ENCODE measurements at regions of chr15 and their contacts with region 1.

Region 1: DNA sequence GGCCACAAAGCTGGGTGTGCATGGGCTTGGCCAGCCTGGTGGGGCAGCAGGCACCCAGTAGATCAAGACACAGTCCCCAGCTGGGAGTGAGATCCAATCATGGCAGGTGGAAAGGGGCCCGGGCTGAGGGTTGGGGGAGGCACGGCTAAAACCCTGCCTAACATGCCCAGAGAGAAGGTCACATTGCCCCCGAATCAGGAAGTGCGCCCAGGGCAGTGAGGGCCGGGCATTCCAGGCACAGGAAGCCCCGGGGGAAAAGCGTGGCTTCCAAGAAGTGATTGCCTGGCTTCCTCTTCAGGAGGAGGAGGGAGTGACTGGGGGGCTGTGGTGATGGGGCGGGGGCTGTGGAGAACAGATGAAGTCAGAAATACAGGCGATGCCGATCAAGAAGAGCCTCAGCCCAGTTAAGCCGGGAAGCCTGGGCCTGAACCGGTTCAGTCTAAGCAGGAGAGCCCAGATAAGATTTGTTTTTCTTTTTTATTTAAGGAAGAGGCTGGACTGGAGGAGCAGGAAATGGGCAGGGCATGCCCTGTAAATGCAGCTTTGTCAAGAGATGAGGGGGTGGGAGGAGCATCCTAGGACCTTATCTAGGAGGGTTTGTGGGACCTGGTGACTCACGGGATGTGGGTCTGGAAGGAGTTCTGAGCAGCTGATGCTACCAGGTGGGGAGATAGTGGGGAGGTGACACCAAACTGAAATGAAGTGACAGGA is 83.9 kb downstream of the CHSY1 start:
- DNase-seq: peak; percentile 93
- ATAC-seq: peak; percentile 81
- H3K4me3 ChIP-seq: peak overlapping the region; percentile 55
- H3K27ac ChIP-seq: peak overlapping the region; percentile 94
- H3K4me1 ChIP-seq: peaks cover 53% of the 10 kb centered on the region
- H3K27me3 ChIP-seq: no peaks in the 10 kb centered on the region
- CTCF ChIP-seq: no peak

Region 2: GRCh38 chr15:101127506-101128076 is 40.3 kb before region 1 on chr15:
- CTCF ChIA-PET with region 1: no interaction called
- POLR2A ChIA-PET with region 1: no interaction called
- intact Hi-C with region 1: loop called (anchors 2 kb)
- DNase-seq: peak; percentile 87
- ATAC-seq: peak; percentile 91
- H3K4me3 ChIP-seq: peak overlapping the region; percentile 24
- H3K27ac ChIP-seq: peak overlapping the region; percentile 86
- H3K4me1 ChIP-seq: peaks cover 41% of the 10 kb centered on the region
- H3K27me3 ChIP-seq: no peaks in the 10 kb centered on the region
- CTCF ChIP-seq: no peak